Transverse colon (tissue), 4 donors: ENCODE measurements at regions of chr12 and their contacts with region 1.

Region 1: DNA sequence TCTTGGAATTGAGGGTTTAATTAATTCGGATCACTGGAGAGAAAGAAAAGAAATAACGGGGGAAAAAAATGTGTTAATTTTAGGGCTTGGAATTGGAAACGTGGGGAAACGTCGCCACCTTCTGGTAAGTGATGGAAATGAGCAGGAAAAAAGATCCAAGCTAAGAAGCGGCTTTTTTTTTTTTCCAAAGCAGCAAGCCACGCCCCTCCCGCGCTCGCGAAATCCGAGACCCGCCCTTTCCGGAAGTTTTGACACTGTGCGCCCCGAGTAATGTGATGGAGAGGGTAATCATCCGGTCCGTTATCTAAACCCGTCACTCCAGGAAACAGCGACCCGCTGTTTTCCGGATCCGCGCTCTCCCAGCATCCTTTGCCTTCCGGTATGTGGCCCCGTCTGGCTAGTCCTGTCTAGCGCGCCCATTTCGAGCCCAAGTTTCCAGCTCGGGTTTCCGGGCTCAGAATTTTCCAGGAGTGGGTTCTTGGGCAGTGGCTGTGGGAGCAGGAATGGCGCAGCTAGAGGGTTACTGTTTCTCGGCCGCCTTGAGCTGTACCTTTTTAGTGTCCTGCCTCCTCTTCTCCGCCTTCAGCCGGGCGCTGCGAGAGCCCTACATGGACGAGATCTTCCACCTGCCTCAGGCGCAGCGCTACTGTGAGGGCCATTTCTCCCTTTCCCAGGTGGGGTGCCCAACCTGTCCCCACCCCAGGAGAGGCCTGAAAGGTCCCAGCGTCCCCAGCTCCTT is at the start of gene ALG10B:
- DNase-seq: peak; percentile 93
- H3K4me3 ChIP-seq: peak within 1 kb of the TSS; percentile 53 to 77 (median 62)
- H3K27ac ChIP-seq: peak within 1 kb of the TSS; percentile 77 to 88 (median 86)
- H3K4me1 ChIP-seq: peaks cover 0 to 18% (median 6%) of the 10 kb centered on the region in 4 donors
- H3K27me3 ChIP-seq: no peaks in the 10 kb centered on the region
- CTCF ChIP-seq: peak; percentile 68 to 80 (median 71)
- EP300 ChIP-seq: no peak
- POLR2A ChIP-seq: no peak
- total RNA-seq, gene ALG10B: 0.37 to 2.6 (median 1.6) TPM

Region 2: GRCh38 chr12:38132139-38132538 is 184.4 kb before region 1 on chr12:
- in situ Hi-C with region 1: loop called (anchors 5 to 25 kb)
- intact Hi-C with region 1: loop called (anchors 5 kb)
- DNase-seq: peak; percentile 32
- H3K4me3 ChIP-seq: no peak overlapping the region
- H3K27ac ChIP-seq: no peak overlapping the region
- H3K4me1 ChIP-seq: no peaks in the 10 kb centered on the region
- H3K27me3 ChIP-seq: no peaks in the 10 kb centered on the region
- CTCF ChIP-seq: no peak
- EP300 ChIP-seq: no peak
- POLR2A ChIP-seq: no peak

Region 3: DNA sequence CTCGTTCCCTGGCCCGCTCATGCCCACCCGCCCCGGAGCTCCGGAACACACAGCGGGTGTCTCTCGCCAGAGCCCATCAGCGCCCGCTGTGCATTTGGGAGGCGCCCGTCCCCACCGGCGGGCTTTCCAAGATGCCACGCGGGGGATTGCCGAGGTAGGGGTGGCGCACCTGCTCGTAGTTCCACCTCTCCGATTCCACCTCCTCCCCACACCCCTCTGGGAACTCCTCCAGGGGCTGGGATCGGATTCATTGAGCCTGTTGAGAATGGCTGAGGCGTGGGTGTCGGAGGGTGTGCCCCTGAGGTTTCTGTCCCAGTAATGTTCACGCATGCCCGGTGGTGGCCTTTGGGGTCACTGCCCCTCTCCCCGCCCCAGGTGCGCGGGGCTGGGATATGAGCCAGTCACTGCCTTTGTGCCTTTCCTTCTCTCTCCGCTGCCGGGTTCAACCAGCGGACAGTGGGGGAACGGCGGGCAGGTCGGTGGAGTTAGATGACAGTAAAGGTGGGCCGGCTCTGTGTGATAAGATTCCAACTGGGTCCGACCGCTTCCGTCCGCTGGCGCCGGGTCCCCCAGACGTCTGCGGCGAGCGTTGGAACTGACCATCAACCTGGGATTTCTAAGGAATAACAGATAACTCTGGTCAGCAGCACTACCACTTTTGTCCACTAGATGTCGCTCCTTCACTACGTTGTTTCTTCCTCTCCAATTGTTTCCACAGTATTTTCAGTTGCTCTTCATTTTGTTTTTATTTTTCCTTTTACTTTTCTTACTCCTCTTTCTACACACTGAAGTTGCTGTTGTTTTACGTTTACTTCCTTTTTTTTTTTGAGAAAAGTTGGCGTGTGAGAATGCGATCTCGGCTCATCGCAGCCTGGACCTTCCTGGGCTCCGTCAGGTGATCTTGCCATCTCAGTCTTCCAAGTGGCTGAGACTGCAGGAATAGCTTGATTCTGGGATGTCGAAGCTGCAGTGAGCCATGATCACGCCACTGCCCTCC is 178.0 kb before region 1 on chr12:
- in situ Hi-C with region 1: loop called (anchors 5 to 25 kb)
- intact Hi-C with region 1: loop called (anchors 5 kb)
- DNase-seq: peak; percentile 71
- H3K4me3 ChIP-seq: peak overlapping the region in 3 of 4 donors; percentile 13 to 54 (median 24)
- H3K27ac ChIP-seq: no peak overlapping the region
- H3K4me1 ChIP-seq: peaks cover 0 to 8% (median 7%) of the 10 kb centered on the region in 4 donors
- H3K27me3 ChIP-seq: peaks cover 14% of the 10 kb centered on the region
- CTCF ChIP-seq: peak; percentile 95 to 99 (median 98)
- EP300 ChIP-seq: no peak
- POLR2A ChIP-seq: no peak

Region 4: GRCh38 chr12:38201461-38202276 is 114.9 kb before region 1 on chr12:
- in situ Hi-C with region 1: no loop called
- intact Hi-C with region 1: no loop called
- DNase-seq: no peak
- H3K4me3 ChIP-seq: no peak overlapping the region
- H3K27ac ChIP-seq: no peak overlapping the region
- H3K4me1 ChIP-seq: no peaks in the 10 kb centered on the region
- H3K27me3 ChIP-seq: no peaks in the 10 kb centered on the region
- CTCF ChIP-seq: no peak
- EP300 ChIP-seq: no peak
- POLR2A ChIP-seq: no peak

Region 5: GRCh38 chr12:38638406-38638805 is 321.8 kb after region 1 on chr12:
- in situ Hi-C with region 1: no loop called
- intact Hi-C with region 1: no loop called
- DNase-seq: no peak
- H3K4me3 ChIP-seq: no peak overlapping the region
- H3K27ac ChIP-seq: no peak overlapping the region
- H3K4me1 ChIP-seq: no peaks in the 10 kb centered on the region
- H3K27me3 ChIP-seq: no peaks in the 10 kb centered on the region
- CTCF ChIP-seq: no peak
- EP300 ChIP-seq: no peak
- POLR2A ChIP-seq: no peak